CD4-positive, alpha-beta T cell (primary cell): ENCODE measurements at regions of chr2 and their contacts with region 1.

Region 1: GRCh38 chr2:211157856-211158463 is 601.6 kb downstream of the CPS1 start:
- DNase-seq: peak; percentile 21 to 66 (median 48)
- ATAC-seq: peak; percentile 72
- H3K4me3 ChIP-seq: no peak overlapping the region
- H3K4me3 Mint-ChIP-seq: no peak overlapping the region
- H3K27ac ChIP-seq: no peak overlapping the region
- H3K27ac Mint-ChIP-seq: no peak overlapping the region
- H3K4me1 ChIP-seq: no peaks in the 10 kb centered on the region
- H3K4me1 Mint-ChIP-seq: no peaks in the 10 kb centered on the region
- H3K27me3 ChIP-seq: no peaks in the 10 kb centered on the region
- H3K27me3 Mint-ChIP-seq: no peaks in the 10 kb centered on the region
- CTCF ChIP-seq: peak; percentile 78

Region 2: GRCh38 chr2:209977386-209978239 is 1180.3 kb before region 1 on chr2:
- CTCF ChIA-PET with region 1: no interaction called
- POLR2A ChIA-PET with region 1: no interaction called
- intact Hi-C with region 1: loop called in 1 of 2 experiments (anchors 5 kb)
- DNase-seq: peak in 3 of 14 experiments; percentile 59 to 70 (median 63)
- ATAC-seq: no peak
- H3K4me3 ChIP-seq: no peak overlapping the region
- H3K4me3 Mint-ChIP-seq: no peak overlapping the region
- H3K27ac ChIP-seq: no peak overlapping the region
- H3K27ac Mint-ChIP-seq: no peak overlapping the region
- H3K4me1 ChIP-seq: no peaks in the 10 kb centered on the region
- H3K4me1 Mint-ChIP-seq: no peaks in the 10 kb centered on the region
- H3K27me3 ChIP-seq: no peaks in the 10 kb centered on the region
- H3K27me3 Mint-ChIP-seq: peaks cover 10% of the 10 kb centered on the region
- CTCF ChIP-seq: peak; percentile 73

Region 3: GRCh38 chr2:210252699-210253606 is 905.0 kb before region 1 on chr2:
- CTCF ChIA-PET with region 1: no interaction called
- POLR2A ChIA-PET with region 1: no interaction called
- intact Hi-C with region 1: loop called (anchors 2 to 5 kb)
- DNase-seq: no peak
- ATAC-seq: no peak
- H3K4me3 ChIP-seq: no peak overlapping the region
- H3K4me3 Mint-ChIP-seq: no peak overlapping the region
- H3K27ac ChIP-seq: no peak overlapping the region
- H3K27ac Mint-ChIP-seq: no peak overlapping the region
- H3K4me1 ChIP-seq: no peaks in the 10 kb centered on the region
- H3K4me1 Mint-ChIP-seq: no peaks in the 10 kb centered on the region
- H3K27me3 ChIP-seq: no peaks in the 10 kb centered on the region
- H3K27me3 Mint-ChIP-seq: no peaks in the 10 kb centered on the region
- CTCF ChIP-seq: no peak

Region 4: GRCh38 chr2:211085056-211085680 is 72.8 kb before region 1 on chr2:
- CTCF ChIA-PET with region 1: no interaction called
- POLR2A ChIA-PET with region 1: no interaction called
- intact Hi-C with region 1: no loop called
- DNase-seq: peak in 2 of 14 experiments; percentile 3 to 7
- ATAC-seq: no peak
- H3K4me3 ChIP-seq: no peak overlapping the region
- H3K4me3 Mint-ChIP-seq: no peak overlapping the region
- H3K27ac ChIP-seq: no peak overlapping the region
- H3K27ac Mint-ChIP-seq: no peak overlapping the region
- H3K4me1 ChIP-seq: no peaks in the 10 kb centered on the region
- H3K4me1 Mint-ChIP-seq: no peaks in the 10 kb centered on the region
- H3K27me3 ChIP-seq: no peaks in the 10 kb centered on the region
- H3K27me3 Mint-ChIP-seq: no peaks in the 10 kb centered on the region
- CTCF ChIP-seq: peak; percentile 38

Region 5: DNA sequence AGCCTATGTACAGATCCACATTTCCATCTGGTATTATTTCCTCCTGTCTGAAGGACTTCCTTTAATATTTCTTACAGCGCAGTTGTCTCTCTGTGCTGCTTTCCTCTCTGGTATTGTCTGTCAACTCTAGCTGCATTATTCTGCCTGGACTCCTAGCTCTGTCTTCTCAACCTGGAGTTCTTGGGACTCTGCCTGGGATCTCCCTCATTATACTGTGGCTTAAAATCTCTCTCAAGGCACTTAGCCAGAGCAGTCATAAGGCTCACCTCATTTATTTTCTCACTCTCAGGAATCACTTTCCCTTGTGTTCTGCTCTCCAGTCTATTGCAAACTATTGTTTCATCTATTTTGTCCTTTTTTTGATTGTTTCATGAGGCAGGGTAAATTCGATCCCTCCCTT is 530.2 kb after region 1 on chr2:
- CTCF ChIA-PET with region 1: no interaction called
- POLR2A ChIA-PET with region 1: no interaction called
- intact Hi-C with region 1: no loop called
- DNase-seq: no peak
- ATAC-seq: no peak
- H3K4me3 ChIP-seq: no peak overlapping the region
- H3K4me3 Mint-ChIP-seq: no peak overlapping the region
- H3K27ac ChIP-seq: no peak overlapping the region
- H3K27ac Mint-ChIP-seq: no peak overlapping the region
- H3K4me1 ChIP-seq: no peaks in the 10 kb centered on the region
- H3K4me1 Mint-ChIP-seq: no peaks in the 10 kb centered on the region
- H3K27me3 ChIP-seq: no peaks in the 10 kb centered on the region
- H3K27me3 Mint-ChIP-seq: no peaks in the 10 kb centered on the region
- CTCF ChIP-seq: no peak